B cell (primary cell): ENCODE measurements at regions of chr19 and their contacts with region 1.

Region 1: GRCh38 chr19:2750808-2751443 is 11.1 kb upstream of the SLC39A3 start:
- DNase-seq: no peak
- ATAC-seq: no peak
- H3K4me3 ChIP-seq: no peak overlapping the region
- H3K4me3 Mint-ChIP-seq: no peak overlapping the region
- H3K27ac ChIP-seq: no peak overlapping the region
- H3K27ac Mint-ChIP-seq: no peak overlapping the region
- H3K4me1 ChIP-seq: peaks cover 8 to 18% of the 10 kb centered on the region in 2 donors
- H3K4me1 Mint-ChIP-seq: peaks cover 10% of the 10 kb centered on the region
- H3K27me3 ChIP-seq: no peaks in the 10 kb centered on the region
- H3K27me3 Mint-ChIP-seq: no peaks in the 10 kb centered on the region
- CTCF ChIP-seq: no peak

Region 2: DNA sequence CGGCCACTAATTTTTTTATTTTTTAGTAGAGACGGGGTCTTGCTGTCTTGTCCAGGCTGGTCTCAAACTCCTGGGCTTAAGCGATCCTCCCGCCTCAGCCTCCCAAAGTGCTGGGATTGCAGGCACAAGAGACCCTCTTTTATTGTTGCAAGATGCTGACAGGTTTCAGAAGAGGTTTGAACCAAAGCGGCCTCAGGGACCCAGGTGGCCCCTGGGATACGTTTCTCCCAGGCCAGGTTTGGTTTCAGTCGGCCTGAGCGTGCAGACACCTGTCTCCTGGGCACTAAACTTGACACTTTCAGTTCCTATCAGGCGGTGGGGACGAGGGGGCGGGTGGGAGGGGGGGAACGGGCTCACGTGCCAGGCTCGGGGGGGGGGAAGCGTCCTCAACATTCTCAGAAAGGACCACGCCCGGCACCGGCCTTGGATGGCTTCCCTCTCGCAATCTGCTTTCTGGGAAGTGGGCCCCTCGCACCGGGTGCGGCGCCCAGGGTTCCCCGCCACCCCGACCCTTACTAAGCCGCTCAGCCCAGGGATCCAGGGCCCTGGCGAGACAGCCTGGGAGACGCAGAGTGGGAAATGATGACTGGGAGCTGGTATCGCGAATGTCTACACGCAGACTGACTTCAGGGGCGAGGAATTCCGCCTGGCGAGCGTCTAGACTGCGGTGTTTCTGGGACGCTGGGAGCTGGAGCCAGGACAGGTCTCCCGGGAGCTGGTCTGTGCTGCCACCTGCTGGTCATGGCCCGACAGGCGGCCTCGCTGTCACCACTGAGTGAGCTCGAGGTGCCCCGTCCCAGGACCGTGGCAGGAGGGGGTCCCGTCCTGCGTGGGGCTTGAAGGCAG is 140.1 kb before region 1 on chr19:
- CTCF ChIA-PET with region 1: interaction called, 11 read pairs
- POLR2A ChIA-PET with region 1: no interaction called
- intact Hi-C with region 1: no loop called
- DNase-seq: peak; percentile 89
- ATAC-seq: peak; percentile 58
- H3K4me3 ChIP-seq: peak overlapping the region in 4 of 5 experiments; percentile 31 to 69 (median 56)
- H3K4me3 Mint-ChIP-seq: peak overlapping the region; percentile 88
- H3K27ac ChIP-seq: peak overlapping the region; percentile 88 to 89
- H3K27ac Mint-ChIP-seq: peak overlapping the region; percentile 91
- H3K4me1 ChIP-seq: peaks cover 61 to 83% of the 10 kb centered on the region in 2 donors
- H3K4me1 Mint-ChIP-seq: peaks cover 74% of the 10 kb centered on the region
- H3K27me3 ChIP-seq: no peaks in the 10 kb centered on the region
- H3K27me3 Mint-ChIP-seq: no peaks in the 10 kb centered on the region
- CTCF ChIP-seq: peak; percentile 93

Region 3: DNA sequence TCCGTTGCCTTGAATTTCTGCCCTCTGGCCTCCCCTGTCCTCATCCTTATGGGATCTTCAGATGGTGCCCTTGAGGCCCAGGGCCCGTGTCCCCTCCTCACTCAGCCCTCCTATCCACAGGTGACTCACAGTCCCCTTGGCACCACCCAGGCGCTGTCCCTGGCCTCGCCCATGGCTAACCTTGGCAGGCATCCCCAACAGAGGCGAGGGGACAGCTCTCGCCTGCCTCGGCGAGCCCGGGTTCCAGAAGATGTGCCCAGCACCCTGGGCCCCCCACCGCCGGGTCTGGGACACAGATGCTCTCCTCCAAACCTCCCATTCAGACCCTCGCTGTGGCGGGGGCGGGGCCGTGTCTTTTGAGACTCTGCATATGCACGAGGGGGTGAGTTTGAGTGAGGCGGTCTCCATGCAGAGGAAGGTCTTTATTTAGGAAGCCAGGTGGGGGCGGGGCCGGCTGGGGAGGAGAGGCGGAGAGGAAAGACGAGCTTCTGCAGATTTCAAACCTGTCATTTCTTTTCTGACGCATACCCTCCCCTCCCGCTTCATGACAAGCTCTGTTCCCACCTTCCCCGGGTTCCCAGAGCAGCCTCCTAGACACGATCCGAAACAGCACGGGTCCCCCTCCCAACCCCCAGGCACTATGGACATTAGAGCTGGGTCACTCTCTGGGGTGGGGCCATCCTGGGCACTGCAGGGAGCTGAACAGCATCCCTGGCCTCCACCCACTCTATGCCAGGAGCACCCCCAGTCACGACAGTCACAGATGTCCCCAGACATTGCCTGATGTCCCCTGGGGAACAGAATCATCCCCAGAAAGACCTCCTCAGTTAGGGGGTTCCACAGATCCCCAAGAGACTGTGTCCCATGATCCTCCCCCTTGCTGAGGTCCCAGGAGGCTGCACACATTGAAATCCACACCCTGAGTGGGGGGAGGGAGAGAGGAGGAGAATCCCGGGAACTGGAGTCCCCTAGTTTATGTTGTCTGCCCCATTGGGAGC is 96.9 kb before region 1 on chr19:
- CTCF ChIA-PET with region 1: interaction called, 156 read pairs
- POLR2A ChIA-PET with region 1: interaction called, 19 read pairs
- intact Hi-C with region 1: no loop called
- DNase-seq: no peak
- ATAC-seq: peak; percentile 32
- H3K4me3 ChIP-seq: no peak overlapping the region
- H3K4me3 Mint-ChIP-seq: no peak overlapping the region
- H3K27ac ChIP-seq: peak overlapping the region in 1 of 2 donors; percentile 28
- H3K27ac Mint-ChIP-seq: peak overlapping the region; percentile 53
- H3K4me1 ChIP-seq: peaks cover 7 to 30% of the 10 kb centered on the region in 2 donors
- H3K4me1 Mint-ChIP-seq: peaks cover 46% of the 10 kb centered on the region
- H3K27me3 ChIP-seq: no peaks in the 10 kb centered on the region
- H3K27me3 Mint-ChIP-seq: no peaks in the 10 kb centered on the region
- CTCF ChIP-seq: no peak

Region 4: GRCh38 chr19:2702162-2703076 is 48.5 kb before region 1 on chr19 and contains the start of gene GNG7:
- CTCF ChIA-PET with region 1: interaction called, 24 read pairs
- POLR2A ChIA-PET with region 1: interaction called, 4 read pairs
- intact Hi-C with region 1: loop called (anchors 1 kb)
- DNase-seq: peak; percentile 94
- ATAC-seq: peak; percentile 98
- H3K4me3 ChIP-seq: peak within 1 kb of the TSS; percentile 58 to 96 (median 77)
- H3K4me3 Mint-ChIP-seq: peak within 1 kb of the TSS; percentile 89
- H3K27ac ChIP-seq: peak within 1 kb of the TSS; percentile 81 to 89
- H3K27ac Mint-ChIP-seq: peak within 1 kb of the TSS; percentile 94
- H3K4me1 ChIP-seq: peaks cover 46 to 50% of the 10 kb centered on the region in 2 donors
- H3K4me1 Mint-ChIP-seq: peaks cover 37% of the 10 kb centered on the region
- H3K27me3 ChIP-seq: no peaks in the 10 kb centered on the region
- H3K27me3 Mint-ChIP-seq: no peaks in the 10 kb centered on the region
- CTCF ChIP-seq: no peak
- total RNA-seq, gene GNG7: 153 and 160 TPM in 2 replicates

Region 5: GRCh38 chr19:2739602-2740313 is 11.2 kb before region 1 on chr19 and contains the start of gene SLC39A3:
- CTCF ChIA-PET with region 1: interaction called, 11 read pairs
- POLR2A ChIA-PET with region 1: no interaction called
- intact Hi-C with region 1: loop called (anchors 1 kb)
- DNase-seq: peak; percentile 98
- ATAC-seq: peak; percentile 100
- H3K4me3 ChIP-seq: peak within 1 kb of the TSS; percentile 50 to 93 (median 87)
- H3K4me3 Mint-ChIP-seq: peak within 1 kb of the TSS; percentile 92
- H3K27ac ChIP-seq: peak within 1 kb of the TSS; percentile 26 to 77
- H3K27ac Mint-ChIP-seq: peak within 1 kb of the TSS; percentile 81
- H3K4me1 ChIP-seq: peaks cover 10 to 20% of the 10 kb centered on the region in 2 donors
- H3K4me1 Mint-ChIP-seq: peaks cover 25% of the 10 kb centered on the region
- H3K27me3 ChIP-seq: no peaks in the 10 kb centered on the region
- H3K27me3 Mint-ChIP-seq: peaks cover 10% of the 10 kb centered on the region
- CTCF ChIP-seq: no peak
- total RNA-seq, gene SLC39A3: 32.8 and 36.4 TPM in 2 replicates